H1 (cell line): ENCODE measurements at regions of chr17 and their contacts with region 1.

Region 1: GRCh38 chr17:35757243-35757642 is 3.4 kb upstream of the C17orf50 start:
- DNase-seq: no peak
- H3K4me3 ChIP-seq: no peak overlapping the region
- H3K27ac ChIP-seq: no peak overlapping the region
- H3K4me1 ChIP-seq: peaks cover 0 to 7% (median 2%) of the 10 kb centered on the region in 4 experiments; a peak in 2 of 7 replicates
- H3K27me3 ChIP-seq: 0 out of 7 replicates have a peak, but pooled peaks cover 0 to 2% (median 0%) of the 10 kb centered on the region in 4 experiments
- CTCF ChIP-seq: no peak
- EP300 ChIP-seq: no peak
- POLR2A ChIP-seq: no peak
- RAD21 ChIP-seq: no peak

Region 2: DNA sequence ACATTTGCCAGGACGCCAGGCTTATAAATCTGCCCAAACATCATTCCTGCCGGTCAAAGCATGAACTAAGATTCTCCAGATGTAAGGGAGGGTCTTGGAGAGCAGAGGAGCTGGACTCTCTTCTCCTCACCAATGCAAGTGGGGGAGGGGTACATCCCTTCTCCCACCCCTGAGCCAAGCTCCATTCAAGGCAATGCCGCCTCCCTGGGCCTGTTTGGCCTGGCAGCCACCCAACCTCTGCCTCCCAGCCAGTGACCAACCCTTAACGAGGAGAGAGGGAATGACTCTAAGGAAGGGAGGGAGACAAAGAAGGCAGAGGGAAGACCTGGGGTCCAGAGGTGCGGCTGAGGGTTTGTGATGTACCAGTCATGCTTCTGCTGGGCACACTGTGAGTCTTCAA is 17.3 kb after region 1 on chr17:
- CTCF ChIA-PET with region 1: interaction called, 247 read pairs
- POLR2A ChIA-PET with region 1: no interaction called
- DNase-seq: no peak
- H3K4me3 ChIP-seq: no peak overlapping the region
- H3K27ac ChIP-seq: no peak overlapping the region
- H3K4me1 ChIP-seq: peaks cover 5 to 21% (median 6%) of the 10 kb centered on the region in 4 experiments
- H3K27me3 ChIP-seq: no peaks in the 10 kb centered on the region
- CTCF ChIP-seq: no peak
- EP300 ChIP-seq: no peak
- POLR2A ChIP-seq: no peak
- RAD21 ChIP-seq: no peak